ENCODE measurements at regions of chr19 and their contacts with region 1.

Region 1: GRCh38 chr19:47600246-47601179 is 8.4 kb upstream of the BICRA start:
- DNase-seq: peak; percentile 96
- ATAC-seq: peak; percentile 92
- H3K4me3 ChIP-seq: peak overlapping the region; percentile 74 to 86
- H3K27ac ChIP-seq: peak overlapping the region; percentile 75
- H3K4me1 ChIP-seq: peaks cover 22 to 35% of the 10 kb centered on the region in 2 experiments
- H3K27me3 ChIP-seq: no peaks in the 10 kb centered on the region
- CTCF ChIP-seq: no peak
- POLR2A ChIP-seq: peak; percentile 69
- RAD21 ChIP-seq: no peak

Region 2: GRCh38 chr19:47514869-47515588 is 85.5 kb before region 1 on chr19 and contains the start of gene NAPA:
- CTCF ChIA-PET with region 1: interaction called, 3 read pairs
- POLR2A ChIA-PET with region 1: no interaction called
- RAD21 ChIA-PET with region 1: interaction called, 3 to 4 read pairs
- intact Hi-C with region 1: loop called (anchors 1 kb)
- DNase-seq: peak; percentile 99
- ATAC-seq: peak; percentile 95
- H3K4me3 ChIP-seq: peak within 1 kb of the TSS; percentile 88 to 100
- H3K27ac ChIP-seq: peak within 1 kb of the TSS; percentile 64
- H3K4me1 ChIP-seq: peaks cover 8 to 26% of the 10 kb centered on the region in 2 experiments; a peak in 3 of 4 replicates
- H3K27me3 ChIP-seq: no peaks in the 10 kb centered on the region
- CTCF ChIP-seq: no peak
- POLR2A ChIP-seq: no peak
- RAD21 ChIP-seq: no peak; the same call in 1 of the 2 replicates
- total RNA-seq, gene NAPA: 58.8 TPM